ENCODE measurements at regions of chr16 and their contacts with region 1.

Region 1: GRCh38 chr16:2429771-2430663 is 770 bp downstream of the CCNF start:
- DNase-seq: no peak
- H3K4me3 ChIP-seq: peak overlapping the region; percentile 91
- H3K27ac ChIP-seq: peak overlapping the region; percentile 82
- H3K4me1 ChIP-seq: peaks cover 23% of the 10 kb centered on the region
- H3K27me3 ChIP-seq: no peaks in the 10 kb centered on the region
- CTCF ChIP-seq: no peak

Region 2: DNA sequence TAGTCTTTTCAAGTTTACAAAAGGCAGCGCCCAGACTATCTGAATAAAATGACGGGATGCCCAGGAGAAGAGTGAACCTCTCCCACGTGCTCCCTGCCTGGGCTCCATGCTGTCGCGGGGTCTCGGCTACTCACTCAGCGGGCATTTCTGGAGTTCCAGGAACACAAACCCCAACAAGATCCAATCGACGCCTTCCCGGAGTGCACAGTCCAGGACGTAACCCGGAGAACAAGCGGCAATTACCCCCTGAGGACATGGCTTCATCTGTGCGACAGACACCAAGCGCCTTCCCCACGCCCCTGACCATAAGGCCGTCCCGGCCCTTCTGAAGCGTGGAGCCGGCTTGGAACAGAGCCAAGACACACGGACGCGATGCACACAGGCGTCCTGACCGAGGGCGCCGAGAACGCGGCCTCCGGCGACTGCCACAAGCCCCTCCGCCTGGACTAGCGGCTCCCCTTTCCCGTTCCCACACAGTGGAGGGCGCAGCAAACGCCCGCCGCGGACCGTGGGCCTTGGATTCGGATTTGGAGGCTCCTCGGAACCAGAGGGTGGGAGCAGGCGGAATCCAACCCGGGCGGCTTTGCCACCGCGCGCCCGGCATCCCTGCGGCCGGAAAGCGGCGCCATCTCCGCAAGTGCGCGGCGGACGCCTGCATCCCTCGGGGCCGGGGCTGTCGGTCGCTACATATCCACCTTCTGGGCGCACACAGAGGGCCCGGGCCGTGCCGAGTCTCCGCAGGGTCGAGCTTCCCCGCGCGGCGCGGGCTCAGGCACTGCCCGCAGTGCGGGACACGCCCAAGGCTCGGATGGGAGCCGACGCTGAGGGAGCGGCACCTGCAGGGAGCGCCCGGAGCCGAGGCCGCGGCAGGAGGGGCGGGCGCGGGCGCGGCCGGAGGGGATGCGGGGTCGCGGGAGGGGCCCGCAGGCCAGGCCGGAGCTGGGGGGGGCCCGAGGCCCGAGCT is 90.2 kb before region 1 on chr16:
- intact Hi-C with region 1: loop called (anchors 10 kb)
- DNase-seq: peak; percentile 52
- H3K4me3 ChIP-seq: peak overlapping the region; percentile 86
- H3K27ac ChIP-seq: peak overlapping the region; percentile 68
- H3K4me1 ChIP-seq: peaks cover 29% of the 10 kb centered on the region
- H3K27me3 ChIP-seq: no peaks in the 10 kb centered on the region
- CTCF ChIP-seq: no peak

Measured in left ventricle myocardium inferior (tissue), 1 donor.